A673 (cell line): ENCODE measurements at regions of chr17 and their contacts with region 1.

Region 1: DNA sequence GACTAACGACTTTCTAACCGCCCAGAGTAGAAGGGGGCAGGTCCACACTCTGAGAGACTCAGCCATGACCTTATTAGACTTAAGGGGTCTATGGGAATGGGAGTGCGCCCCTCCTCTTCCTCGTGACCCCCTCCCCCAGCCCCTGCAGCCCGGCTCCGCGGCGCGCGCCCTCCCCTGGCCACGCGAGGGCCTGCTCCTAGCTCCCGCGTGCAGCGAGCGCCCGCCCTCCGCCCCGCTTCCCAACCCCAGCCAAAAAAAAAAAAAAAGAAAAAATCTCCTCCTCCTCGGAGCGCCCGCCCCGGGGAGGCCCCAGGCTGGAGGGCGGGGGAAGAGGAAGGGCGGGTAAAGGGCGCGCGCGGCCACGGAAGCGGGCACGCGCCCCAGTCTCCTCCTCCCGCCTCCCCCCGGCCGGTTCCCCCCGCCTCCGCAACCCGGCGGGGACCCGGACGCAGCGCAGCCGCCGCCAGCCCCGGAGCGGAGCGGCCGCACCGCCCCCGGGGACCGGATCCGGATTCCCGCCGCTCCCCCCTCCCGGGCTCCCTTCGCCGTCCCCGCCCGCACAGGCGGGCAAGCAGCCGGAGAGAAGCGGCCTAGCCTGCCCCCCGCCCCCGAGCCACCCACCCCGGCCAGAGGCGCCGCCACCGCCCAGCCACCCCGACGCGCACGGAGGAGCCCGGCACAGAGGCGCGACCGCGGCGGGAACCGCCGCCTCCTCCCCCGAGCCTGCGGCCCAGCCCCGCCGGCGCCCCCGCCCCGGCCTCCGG is 949 bp downstream of the UBTF start:
- DNase-seq: peak; percentile 88
- H3K4me3 ChIP-seq: peak overlapping the region; percentile 72
- H3K27ac ChIP-seq: peak overlapping the region; percentile 93
- H3K4me1 ChIP-seq: peaks cover 9% of the 10 kb centered on the region
- H3K27me3 ChIP-seq: no peaks in the 10 kb centered on the region
- CTCF ChIP-seq: peak; percentile 50

Region 2: GRCh38 chr17:43878260-43879175 is 340.0 kb before region 1 on chr17:
- CTCF ChIA-PET with region 1: no interaction called
- POLR2A ChIA-PET with region 1: no interaction called
- intact Hi-C with region 1: no loop called
- DNase-seq: peak; percentile 76
- H3K4me3 ChIP-seq: no peak overlapping the region
- H3K27ac ChIP-seq: no peak overlapping the region
- H3K4me1 ChIP-seq: no peaks in the 10 kb centered on the region
- H3K27me3 ChIP-seq: no peaks in the 10 kb centered on the region
- CTCF ChIP-seq: peak; percentile 79

Region 3: GRCh38 chr17:44324571-44325275 is 106.2 kb after region 1 on chr17 and contains the start of gene SLC25A39:
- CTCF ChIA-PET with region 1: interaction called, 3 read pairs
- POLR2A ChIA-PET with region 1: no interaction called
- intact Hi-C with region 1: loop called (anchors 5 kb)
- DNase-seq: peak; percentile 85
- H3K4me3 ChIP-seq: peak within 1 kb of the TSS; percentile 67
- H3K27ac ChIP-seq: peak within 1 kb of the TSS; percentile 75
- H3K4me1 ChIP-seq: no peaks in the 10 kb centered on the region
- H3K27me3 ChIP-seq: no peaks in the 10 kb centered on the region
- CTCF ChIP-seq: no peak
- total RNA-seq, gene SLC25A39: 75.5 and 83.5 TPM in 2 replicates

Region 4: GRCh38 chr17:44354582-44355561 is 136.3 kb after region 1 on chr17:
- CTCF ChIA-PET with region 1: no interaction called
- POLR2A ChIA-PET with region 1: interaction called, 10 read pairs
- intact Hi-C with region 1: no loop called
- DNase-seq: no peak
- H3K4me3 ChIP-seq: no peak overlapping the region
- H3K27ac ChIP-seq: no peak overlapping the region
- H3K4me1 ChIP-seq: no peaks in the 10 kb centered on the region
- H3K27me3 ChIP-seq: no peaks in the 10 kb centered on the region
- CTCF ChIP-seq: no peak